ENCODE measurements at regions of chr2 and their contacts with region 1.

Region 1: DNA sequence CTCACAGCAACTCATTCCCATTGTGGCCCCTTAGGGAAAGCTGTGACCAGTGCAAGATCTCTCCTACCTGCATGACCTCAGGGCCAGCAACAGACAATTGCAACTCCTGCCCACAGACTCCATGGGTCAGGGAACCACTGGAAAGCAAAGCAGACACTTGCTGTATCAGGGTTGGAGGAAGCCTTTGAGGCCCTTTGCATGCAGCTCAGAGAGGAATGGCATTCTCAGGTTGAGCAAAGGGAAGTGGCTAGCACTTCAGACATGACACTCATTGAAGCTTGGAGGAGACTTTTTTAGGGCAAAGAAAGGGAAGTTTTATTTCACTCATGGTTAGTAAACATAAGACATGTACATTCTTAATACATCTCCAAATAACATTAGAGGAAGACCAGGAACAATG is 22.1 kb downstream of the IL1F10 start:
- DNase-seq: no peak
- ATAC-seq: no peak
- H3K4me3 ChIP-seq: no peak overlapping the region
- H3K27ac ChIP-seq: no peak overlapping the region
- H3K4me1 ChIP-seq: no peaks in the 10 kb centered on the region
- H3K27me3 ChIP-seq: peaks cover 0 to 8% (median 0%) of the 10 kb centered on the region in 7 donors
- CTCF ChIP-seq: no peak

Region 2: DNA sequence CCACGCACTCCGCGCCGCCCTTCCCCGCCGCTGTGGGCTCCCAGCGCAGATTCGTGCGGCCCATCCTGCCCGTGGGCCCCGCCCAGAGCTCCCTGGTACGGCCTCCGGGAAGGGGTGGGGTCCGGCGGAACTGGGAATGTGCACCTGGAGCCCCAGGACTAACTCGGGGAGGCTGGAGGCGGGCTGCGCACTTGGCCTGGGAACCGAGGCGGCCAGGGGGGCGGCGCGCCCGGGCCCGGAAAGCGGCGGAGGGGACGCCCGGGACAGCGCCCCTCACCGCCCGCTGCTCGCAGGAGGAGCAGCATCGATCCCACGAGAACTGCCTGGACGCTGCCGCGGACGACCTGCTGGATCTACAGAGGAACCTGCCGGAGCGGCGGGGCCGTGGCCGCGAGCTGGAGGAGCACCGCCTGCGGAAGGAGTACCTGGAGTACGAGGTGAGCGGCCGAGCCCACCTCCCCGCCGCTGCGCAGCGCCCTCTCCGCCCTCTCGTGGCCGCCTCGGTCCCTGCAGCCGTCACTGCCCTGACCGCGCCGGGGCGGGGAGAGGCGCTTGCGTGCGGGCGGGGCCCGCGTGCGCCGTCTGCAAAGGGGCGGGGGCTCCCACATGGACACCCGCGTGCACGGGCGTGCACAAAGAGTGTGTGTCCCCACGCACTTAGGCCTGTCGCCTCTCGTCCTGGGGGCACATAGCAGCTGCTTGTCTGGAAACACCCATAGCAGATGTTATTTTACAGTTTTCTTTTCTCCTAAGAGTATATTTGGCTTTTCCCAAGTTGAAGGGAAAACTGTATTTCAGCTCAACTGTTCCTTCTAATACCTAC is 109.1 kb after region 1 on chr2:
- intact Hi-C with region 1: loop called in 1 of 10 experiments (anchors 5 kb)
- DNase-seq: peak; percentile 63 to 84
- ATAC-seq: peak; percentile 83 to 95 (median 90)
- H3K4me3 ChIP-seq: peak overlapping the region; percentile 57 to 90 (median 82)
- H3K27ac ChIP-seq: peak overlapping the region in 7 of 10 donors; percentile 3 to 81 (median 46)
- H3K4me1 ChIP-seq: peaks cover 0 to 17% (median 8%) of the 10 kb centered on the region in 9 donors
- H3K27me3 ChIP-seq: no peaks in the 10 kb centered on the region
- CTCF ChIP-seq: peak; percentile 82 to 99 (median 97)